Naive thymus-derived CD8-positive, alpha-beta T cell (primary cell): ENCODE measurements at regions of chr20 and their contacts with region 1.

Region 1: GRCh38 chr20:24027229-24027628 is 38.6 kb upstream of the GGTLC1 start:
- DNase-seq: peak; percentile 30 to 90 (median 76)
- ATAC-seq: peak; percentile 98 to 99
- H3K4me3 Mint-ChIP-seq: peak overlapping the region; percentile 25 to 76 (median 66)
- H3K27ac Mint-ChIP-seq: peak overlapping the region; percentile 94 to 98 (median 96)
- H3K4me1 Mint-ChIP-seq: peaks cover 21 to 54% (median 38%) of the 10 kb centered on the region in 4 donors
- H3K27me3 Mint-ChIP-seq: no peaks in the 10 kb centered on the region

Region 2: GRCh38 chr20:24039196-24039595 is 12.0 kb after region 1 on chr20:
- POLR2A ChIA-PET with region 1: interaction called, 28 read pairs
- DNase-seq: no peak
- ATAC-seq: no peak
- H3K4me3 Mint-ChIP-seq: no peak overlapping the region
- H3K27ac Mint-ChIP-seq: peak overlapping the region in 2 of 10 donors; percentile 12 to 40
- H3K4me1 Mint-ChIP-seq: peaks cover 7 to 19% (median 11%) of the 10 kb centered on the region in 4 donors
- H3K27me3 Mint-ChIP-seq: no peaks in the 10 kb centered on the region

Region 3: DNA sequence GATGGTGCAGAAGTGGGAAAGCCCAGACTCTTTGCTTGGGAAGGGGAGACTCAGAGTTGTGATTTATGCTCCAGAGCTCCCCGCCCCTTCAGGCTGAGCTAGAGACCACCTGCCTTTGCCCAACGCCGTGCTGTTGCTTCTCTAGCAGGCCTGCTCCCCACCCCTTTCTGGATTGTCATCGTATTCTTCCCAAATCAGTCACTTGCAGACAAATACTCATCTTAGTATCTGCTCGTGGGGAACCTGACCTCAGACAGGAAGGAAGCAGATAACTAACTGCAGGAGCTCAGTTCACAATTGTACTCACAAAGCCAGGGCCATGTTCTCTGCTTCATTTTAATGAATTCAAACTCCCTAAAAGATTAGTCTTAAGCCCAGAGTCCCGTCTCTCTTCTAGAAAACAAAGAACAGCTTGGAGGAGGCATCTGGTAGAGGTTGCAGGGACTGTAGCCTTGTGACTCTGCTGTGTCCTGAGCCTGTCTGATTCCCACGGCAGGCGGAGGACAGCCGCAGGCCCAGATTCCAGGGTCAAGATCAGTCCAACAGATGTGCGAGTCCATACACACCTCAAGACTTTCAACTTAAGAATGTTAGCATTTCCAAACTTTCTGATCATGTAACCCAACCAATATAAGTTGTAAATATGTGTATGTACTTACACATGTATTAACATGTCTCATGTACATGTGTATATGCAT is 18.5 kb after region 1 on chr20:
- POLR2A ChIA-PET with region 1: interaction called, 28 read pairs
- DNase-seq: peak in 2 of 10 donors; percentile 24 to 34
- ATAC-seq: peak; percentile 64 to 79
- H3K4me3 Mint-ChIP-seq: peak overlapping the region in 9 of 10 donors; percentile 14 to 73 (median 62)
- H3K27ac Mint-ChIP-seq: peak overlapping the region; percentile 81 to 93 (median 88)
- H3K4me1 Mint-ChIP-seq: peaks cover 16 to 54% (median 44%) of the 10 kb centered on the region in 4 donors
- H3K27me3 Mint-ChIP-seq: no peaks in the 10 kb centered on the region